ENCODE measurements at regions of chr22 and their contacts with region 1.

Region 1: GRCh38 chr22:35124691-35125219 is 58.8 kb downstream of the ISX start:
- DNase-seq: no peak
- ATAC-seq: no peak

Region 2: DNA sequence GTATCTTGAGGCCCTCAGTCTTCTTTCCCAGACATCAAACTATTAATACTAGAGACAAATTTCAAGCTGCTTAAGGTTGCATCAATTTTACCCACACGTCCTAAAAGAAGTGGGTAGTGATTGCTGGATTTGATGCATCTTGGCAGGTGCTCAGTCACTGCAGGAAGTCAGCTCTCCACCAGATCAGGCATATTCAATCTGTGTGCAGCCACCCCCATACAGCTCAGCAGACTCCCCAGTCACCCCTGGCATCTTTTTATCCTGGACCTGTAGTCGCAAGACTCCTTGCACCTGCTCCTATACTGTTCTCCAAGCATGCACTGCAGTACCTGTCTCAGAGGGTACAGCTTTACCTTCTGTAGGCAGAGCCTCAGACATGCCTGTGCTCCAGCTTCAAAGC is 401.9 kb before region 1 on chr22:
- intact Hi-C with region 1: loop called (anchors 5 kb)
- DNase-seq: no peak
- ATAC-seq: no peak

Region 3: GRCh38 chr22:34800260-34800980 is 324.3 kb before region 1 on chr22:
- intact Hi-C with region 1: no loop called
- DNase-seq: no peak
- ATAC-seq: no peak

Region 4: GRCh38 chr22:35072925-35073324 is 51.8 kb before region 1 on chr22:
- intact Hi-C with region 1: no loop called
- DNase-seq: no peak
- ATAC-seq: no peak

Region 5: GRCh38 chr22:35446365-35446764 is 321.6 kb after region 1 on chr22:
- intact Hi-C with region 1: no loop called
- DNase-seq: no peak
- ATAC-seq: no peak

Measured in Right ventricle myocardium inferior (tissue), 1 donor.